Tibial artery (tissue), 4 donors: ENCODE measurements at regions of chr2 and their contacts with region 1.

Region 1: DNA sequence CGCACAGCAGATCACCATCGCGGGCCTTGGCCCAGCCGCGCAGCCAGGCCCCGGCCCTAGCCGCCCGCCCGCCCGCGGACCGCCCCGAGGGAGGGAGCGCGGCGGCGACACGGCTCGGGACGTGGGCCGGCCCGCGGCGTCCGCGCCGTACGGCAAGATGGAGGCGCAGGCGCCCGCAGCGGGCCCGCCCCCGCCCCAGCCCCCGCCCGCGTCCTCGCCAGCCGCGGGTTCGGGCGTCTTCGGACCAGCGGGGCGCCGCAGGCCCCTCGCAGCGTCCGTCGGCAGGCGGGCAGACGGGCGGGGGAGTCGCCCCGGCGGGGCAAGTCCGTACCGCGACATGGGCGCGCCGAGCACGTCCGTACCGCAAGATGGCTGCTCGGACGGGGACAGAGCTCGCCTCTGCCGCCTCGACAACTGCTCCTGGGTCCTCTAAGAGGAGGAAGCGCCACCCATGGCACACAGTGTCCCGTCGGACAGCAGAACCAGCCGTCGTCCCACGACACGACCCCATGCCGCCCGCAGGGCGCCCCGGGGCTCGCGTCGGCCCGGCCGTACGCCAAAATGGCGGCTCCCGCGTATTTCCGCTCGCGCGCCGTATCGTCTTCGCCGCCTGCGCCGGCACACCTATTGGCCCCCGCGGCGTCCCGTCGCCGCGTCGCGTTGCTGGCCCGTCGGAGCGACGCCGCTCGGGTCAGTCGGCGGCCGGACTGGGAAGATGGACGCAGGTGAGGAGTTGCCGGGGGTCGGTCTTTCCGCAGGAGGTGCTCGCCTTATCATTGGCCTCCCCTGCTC is at the starts of genes ATG4B and THAP4:
- DNase-seq: peak; percentile 78 to 91
- H3K4me3 ChIP-seq: peak within 1 kb of the TSS; percentile 72 to 77
- H3K27ac ChIP-seq: peak within 1 kb of the TSS; percentile 94 to 99
- H3K4me1 ChIP-seq: peaks cover 0 to 50% (median 38%) of the 10 kb centered on the region in 4 donors
- H3K27me3 ChIP-seq: no peaks in the 10 kb centered on the region
- CTCF ChIP-seq: peak in 1 of 2 experiments; percentile 5

Region 2: DNA sequence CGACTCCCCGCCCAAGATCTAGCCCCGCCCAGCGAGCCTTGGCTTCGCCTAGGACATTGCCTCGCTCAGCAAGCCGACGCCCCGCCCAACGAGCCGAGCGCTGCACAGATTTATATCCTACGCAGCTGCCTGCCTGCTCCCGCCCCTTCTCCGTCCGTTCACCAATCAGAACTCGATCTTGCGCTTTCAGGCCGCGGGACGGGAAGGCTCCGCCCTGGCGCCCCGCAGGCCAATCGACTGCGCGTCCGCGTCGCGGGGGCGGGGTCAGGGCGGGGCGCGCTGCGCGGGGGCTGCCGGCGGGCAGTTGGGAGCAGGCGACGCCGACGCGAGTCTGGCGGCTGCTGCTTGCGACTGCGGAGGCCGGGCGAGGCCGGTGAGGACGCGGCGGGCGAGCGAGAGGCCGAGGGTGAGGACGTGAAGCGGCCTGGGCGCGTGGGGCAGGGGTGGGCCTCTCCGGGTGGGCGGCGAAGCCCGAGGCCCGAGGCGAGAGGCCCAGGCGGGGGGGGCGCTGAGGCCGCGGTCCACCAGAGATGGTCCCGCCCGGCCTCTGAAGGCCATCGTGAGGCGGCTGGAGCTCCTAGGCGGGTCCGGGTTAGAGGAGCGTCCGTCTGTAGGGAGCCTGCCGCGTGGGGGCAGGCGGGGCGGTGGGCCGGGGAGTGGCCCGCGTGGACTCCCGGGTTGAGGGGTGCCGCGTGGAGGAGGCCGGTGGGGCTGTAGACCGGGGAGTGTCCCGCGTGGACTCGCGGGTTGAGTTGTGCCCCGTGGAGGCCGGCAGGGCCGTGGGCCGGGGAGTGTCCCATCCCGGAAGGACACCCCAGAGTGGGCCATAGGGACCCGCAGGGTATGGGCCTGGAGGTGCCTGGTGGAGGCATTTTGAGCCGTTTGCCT is 281.0 kb before region 1 on chr2 and contains the start of gene FARP2:
- intact Hi-C with region 1: loop called (anchors 10 kb)
- DNase-seq: peak; percentile 100
- H3K4me3 ChIP-seq: peak within 1 kb of the TSS; percentile 81 to 93
- H3K27ac ChIP-seq: peak within 1 kb of the TSS; percentile 86 to 95
- H3K4me1 ChIP-seq: peaks cover 0 to 36% (median 18%) of the 10 kb centered on the region in 4 donors
- H3K27me3 ChIP-seq: no peaks in the 10 kb centered on the region
- CTCF ChIP-seq: no peak

Region 3: DNA sequence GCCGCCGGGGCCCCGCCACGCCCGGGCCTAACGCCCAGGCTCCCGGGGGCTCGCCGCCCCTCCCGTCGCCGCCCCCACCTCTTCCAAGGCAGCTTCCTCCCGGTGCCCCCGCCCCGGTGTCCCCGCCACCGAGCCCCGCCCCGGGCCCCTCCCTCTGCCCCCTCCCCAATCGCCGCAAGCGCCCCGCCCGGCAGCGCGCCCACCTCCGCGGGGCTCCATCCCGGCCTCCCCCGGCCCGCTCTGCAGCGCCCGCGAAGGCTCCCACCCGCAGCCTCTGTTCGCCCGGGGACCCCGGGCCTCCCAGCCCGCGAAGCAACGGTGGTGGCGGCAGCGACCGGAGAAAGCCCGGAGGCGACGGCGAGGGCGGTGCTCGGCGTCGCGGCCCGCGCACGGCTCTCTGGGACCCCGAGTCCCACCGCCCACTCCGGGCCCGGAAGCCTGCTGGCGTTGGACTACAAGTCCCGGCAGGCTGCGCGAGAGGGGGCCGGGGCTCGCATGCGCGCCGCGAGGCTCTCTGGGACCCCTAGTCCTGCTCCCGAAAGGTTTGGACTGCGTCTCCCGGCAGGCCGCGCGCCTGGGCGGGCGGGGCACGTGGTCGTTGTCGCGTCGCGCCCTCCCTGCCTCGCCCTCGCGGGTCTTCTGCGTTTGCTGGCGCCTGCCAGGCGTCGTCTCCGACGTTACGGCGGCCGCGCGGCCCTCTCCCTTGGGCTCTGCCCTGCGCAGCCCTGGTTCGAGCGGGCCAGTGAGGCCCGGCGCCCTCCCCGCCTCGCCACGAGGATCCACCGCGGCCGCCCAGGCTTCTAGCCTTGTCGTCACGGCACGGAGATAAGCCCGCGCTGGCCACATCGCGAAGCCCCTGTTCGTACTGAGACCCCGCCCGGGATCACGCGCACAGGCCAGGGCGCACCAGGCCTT is 128.7 kb before region 1 on chr2 and contains the start of gene STK25:
- intact Hi-C with region 1: loop called (anchors 10 kb)
- DNase-seq: peak; percentile 96 to 98
- H3K4me3 ChIP-seq: peak within 1 kb of the TSS; percentile 86
- H3K27ac ChIP-seq: peak within 1 kb of the TSS; percentile 75 to 89
- H3K4me1 ChIP-seq: peaks cover 0 to 48% (median 28%) of the 10 kb centered on the region in 4 donors
- H3K27me3 ChIP-seq: no peaks in the 10 kb centered on the region
- CTCF ChIP-seq: no peak

Region 4: DNA sequence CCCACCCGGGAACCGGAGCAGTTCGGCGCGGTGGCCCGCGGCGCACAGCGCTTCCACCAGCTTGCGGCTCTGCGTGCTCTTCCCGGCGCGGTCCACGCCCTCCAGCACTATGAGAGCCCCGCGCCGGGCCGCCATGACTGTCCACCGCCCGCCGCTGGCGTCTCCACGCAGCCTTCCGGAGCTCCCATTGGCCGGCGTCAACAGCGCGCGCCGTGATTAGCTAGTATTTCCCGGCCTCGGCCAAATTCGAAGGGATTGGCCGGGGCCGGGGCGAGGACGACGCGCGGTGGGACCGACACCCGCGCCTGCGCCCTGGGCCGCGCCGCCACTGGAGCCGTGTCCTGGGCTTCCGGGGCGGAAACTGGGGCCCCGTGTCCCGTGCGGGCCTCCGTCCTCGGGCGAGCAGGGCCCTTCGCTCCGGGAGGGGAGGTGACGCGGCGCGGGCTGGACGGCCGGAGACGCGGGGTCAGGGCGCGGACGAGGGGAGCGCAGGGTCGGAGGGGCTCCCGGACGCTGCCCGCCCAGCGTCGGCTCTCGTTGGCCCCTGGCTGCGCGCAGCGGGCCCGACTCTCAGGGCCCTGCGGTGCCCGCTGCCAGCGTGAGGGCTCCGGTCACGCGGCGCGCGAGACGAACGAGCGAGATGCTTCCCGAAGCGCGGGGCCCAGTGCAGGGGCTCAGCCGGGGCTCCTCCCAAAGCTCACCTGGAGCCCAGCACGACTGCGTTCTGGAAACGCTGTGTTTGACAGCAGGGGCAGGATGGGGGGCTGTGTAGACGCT is 49.6 kb after region 1 on chr2 and contains the start of gene DTYMK:
- intact Hi-C with region 1: loop called (anchors 2 kb)
- DNase-seq: peak; percentile 96 to 98
- H3K4me3 ChIP-seq: peak within 1 kb of the TSS; percentile 74 to 89
- H3K27ac ChIP-seq: peak within 1 kb of the TSS; percentile 87 to 95
- H3K4me1 ChIP-seq: peaks cover 0 to 33% (median 27%) of the 10 kb centered on the region in 4 donors
- H3K27me3 ChIP-seq: no peaks in the 10 kb centered on the region
- CTCF ChIP-seq: no peak

Region 5: DNA sequence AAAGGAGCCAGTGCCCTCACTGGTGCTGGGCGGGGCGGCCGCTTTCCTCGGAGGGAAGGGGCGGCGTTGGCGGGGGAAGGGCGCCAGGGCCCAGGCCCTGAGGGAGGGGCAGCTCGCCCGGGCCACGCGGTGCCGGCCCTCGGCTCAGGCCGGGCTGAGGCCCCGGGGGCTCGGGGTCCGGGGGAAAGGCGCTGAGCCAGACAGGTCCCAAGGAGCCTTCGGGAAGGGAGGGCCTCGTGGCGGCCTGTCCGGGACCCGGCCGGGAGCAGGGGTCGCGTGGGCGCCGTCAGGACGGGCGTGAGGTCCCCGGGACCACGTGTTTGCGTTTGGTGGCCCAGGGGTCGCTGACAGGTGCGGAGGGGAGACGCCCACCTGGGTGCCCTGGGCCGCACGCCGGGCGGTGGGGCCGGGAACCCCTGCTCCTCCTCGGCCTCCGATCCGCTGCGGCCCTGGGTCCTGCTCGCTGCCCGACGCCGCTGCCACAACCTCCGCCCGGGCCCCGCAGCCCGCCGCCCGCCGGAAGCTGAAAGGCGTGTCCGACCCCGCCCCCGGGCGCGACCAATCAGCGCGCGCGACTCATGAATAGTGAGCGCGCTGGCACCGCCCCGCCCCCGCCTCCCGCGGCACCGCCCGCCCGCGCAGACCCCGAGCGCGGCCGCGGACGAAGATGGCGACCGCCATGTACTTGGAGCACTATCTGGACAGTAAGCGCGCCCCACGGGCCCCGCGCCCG is 64.4 kb after region 1 on chr2 and contains the start of gene ING5:
- intact Hi-C with region 1: loop called (anchors 1 kb)
- DNase-seq: peak; percentile 97 to 98
- H3K4me3 ChIP-seq: peak within 1 kb of the TSS; percentile 83 to 87
- H3K27ac ChIP-seq: peak within 1 kb of the TSS; percentile 93 to 98
- H3K4me1 ChIP-seq: peaks cover 0 to 26% (median 20%) of the 10 kb centered on the region in 4 donors
- H3K27me3 ChIP-seq: no peaks in the 10 kb centered on the region
- CTCF ChIP-seq: no peak